Esophagus muscularis mucosa (tissue), 4 donors: ENCODE measurements at regions of chr2 and their contacts with region 1.

Region 1: GRCh38 chr2:55175254-55176025 is 56.7 kb downstream of the CLHC1 start:
- DNase-seq: no peak
- H3K4me3 ChIP-seq: no peak overlapping the region
- H3K27ac ChIP-seq: no peak overlapping the region
- H3K4me1 ChIP-seq: peaks cover 0 to 21% (median 14%) of the 10 kb centered on the region in 4 donors
- H3K27me3 ChIP-seq: no peaks in the 10 kb centered on the region
- CTCF ChIP-seq: peak; percentile 60 to 69 (median 69)
- EP300 ChIP-seq: no peak
- POLR2A ChIP-seq: no peak

Region 2: DNA sequence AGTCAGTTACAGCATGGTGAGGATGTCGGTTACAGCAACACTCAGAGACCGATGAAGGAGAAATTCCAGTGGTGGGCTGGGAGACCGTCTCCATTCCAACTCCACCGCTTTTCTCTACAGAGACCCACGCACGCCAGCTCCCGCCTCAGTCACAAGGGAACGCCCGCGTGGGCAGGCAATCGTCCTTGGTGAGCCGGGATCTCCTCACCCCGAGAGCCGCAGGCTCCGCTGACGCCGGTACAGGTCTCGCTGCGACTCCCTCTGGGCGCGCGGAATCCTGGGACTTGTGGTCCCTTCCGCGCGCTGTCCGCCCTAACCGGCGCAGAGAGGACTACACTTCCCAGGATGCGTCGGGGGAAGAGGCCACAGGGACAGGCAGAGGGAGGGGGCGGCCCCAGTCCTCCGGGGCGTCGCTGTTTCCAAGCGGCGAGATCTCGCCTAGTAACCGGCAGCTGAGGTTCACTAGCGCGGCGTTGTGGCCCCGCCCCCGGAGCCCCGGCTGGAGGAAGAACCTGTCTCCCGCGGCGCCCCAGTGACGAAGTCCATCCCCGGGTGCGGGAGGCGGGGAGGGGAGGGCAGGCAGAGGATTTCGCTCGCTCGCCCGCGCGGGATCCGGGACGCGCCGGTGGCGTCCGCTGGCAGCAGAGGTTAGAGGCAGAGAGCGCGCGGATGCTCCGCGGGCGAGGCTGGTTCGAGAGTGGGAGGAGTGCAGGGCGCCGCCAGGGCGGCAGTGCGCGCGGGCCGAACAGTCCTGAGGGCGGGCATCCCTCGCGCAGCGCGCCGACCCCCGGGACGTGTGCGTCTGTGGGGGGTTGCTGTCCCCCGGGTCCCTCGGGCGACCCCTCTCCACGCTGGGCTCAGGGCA is 452.1 kb before region 1 on chr2 and contains the start of gene EML6:
- intact Hi-C with region 1: loop called (anchors 5 kb)
- DNase-seq: peak; percentile 99
- H3K4me3 ChIP-seq: peak within 1 kb of the TSS; percentile 71 to 86 (median 79)
- H3K27ac ChIP-seq: peak within 1 kb of the TSS; percentile 72 to 84 (median 82)
- H3K4me1 ChIP-seq: peaks cover 4 to 23% (median 23%) of the 10 kb centered on the region in 4 donors
- H3K27me3 ChIP-seq: peaks cover 0 to 9% (median 0%) of the 10 kb centered on the region in 4 donors
- CTCF ChIP-seq: peak in 2 of 3 experiments; percentile 7 to 31
- EP300 ChIP-seq: no peak
- POLR2A ChIP-seq: peak; percentile 58
- total RNA-seq, gene EML6: 0.75 to 4.6 (median 0.89) TPM

Region 3: DNA sequence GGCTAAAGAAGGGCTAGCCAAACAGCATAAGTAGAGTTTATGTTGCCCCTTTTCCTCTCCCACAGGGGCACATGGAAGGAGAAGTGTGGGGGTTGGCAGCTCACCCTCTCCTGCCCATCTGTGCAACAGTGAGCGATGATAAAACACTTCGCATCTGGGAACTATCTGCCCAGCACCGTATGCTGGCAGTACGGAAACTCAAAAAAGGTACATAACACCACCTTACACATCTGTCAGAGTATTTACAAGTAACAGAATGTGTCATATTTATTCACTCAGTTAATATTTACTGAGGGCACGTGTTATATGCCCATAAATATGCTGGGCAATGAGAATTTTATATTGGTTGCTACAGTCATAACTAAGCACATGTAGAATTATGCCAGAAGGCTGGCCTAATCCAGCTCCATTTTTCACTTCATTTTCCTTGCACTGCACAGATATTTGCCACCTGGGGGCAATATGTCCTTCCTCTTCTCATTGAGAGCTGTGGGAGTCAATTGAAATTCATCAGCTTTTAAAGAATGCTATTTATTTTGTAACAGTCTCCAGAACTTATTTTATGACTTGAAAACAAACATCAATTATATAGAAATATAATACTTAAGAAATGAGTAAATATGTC is 275.8 kb before region 1 on chr2:
- intact Hi-C with region 1: loop called (anchors 2 kb)
- DNase-seq: no peak
- H3K4me3 ChIP-seq: no peak overlapping the region
- H3K27ac ChIP-seq: no peak overlapping the region
- H3K4me1 ChIP-seq: no peaks in the 10 kb centered on the region
- H3K27me3 ChIP-seq: no peaks in the 10 kb centered on the region
- CTCF ChIP-seq: peak; percentile 62 to 66 (median 65)
- EP300 ChIP-seq: no peak
- POLR2A ChIP-seq: no peak

Region 4: GRCh38 chr2:54927085-54927750 is 248.2 kb before region 1 on chr2:
- intact Hi-C with region 1: no loop called
- DNase-seq: no peak
- H3K4me3 ChIP-seq: no peak overlapping the region
- H3K27ac ChIP-seq: no peak overlapping the region
- H3K4me1 ChIP-seq: no peaks in the 10 kb centered on the region
- H3K27me3 ChIP-seq: no peaks in the 10 kb centered on the region
- CTCF ChIP-seq: no peak
- EP300 ChIP-seq: no peak
- POLR2A ChIP-seq: no peak

Region 5: GRCh38 chr2:55063713-55064323 is 111.6 kb before region 1 on chr2:
- intact Hi-C with region 1: no loop called
- DNase-seq: no peak
- H3K4me3 ChIP-seq: no peak overlapping the region
- H3K27ac ChIP-seq: no peak overlapping the region
- H3K4me1 ChIP-seq: no peaks in the 10 kb centered on the region
- H3K27me3 ChIP-seq: no peaks in the 10 kb centered on the region
- CTCF ChIP-seq: peak; percentile 19 to 31 (median 21)
- EP300 ChIP-seq: no peak
- POLR2A ChIP-seq: no peak